ENCODE measurements at regions of chr18 and their contacts with region 1.

Region 1: GRCh38 chr18:45920367-45920766 is 46.8 kb downstream of the EPG5 start:
- DNase-seq: peak; percentile 89
- ATAC-seq: peak; percentile 96

Region 2: GRCh38 chr18:45967007-45967706 is 46.8 kb after region 1 on chr18 and contains the start of gene EPG5:
- intact Hi-C with region 1: loop called in 1 of 2 experiments (anchors 5 kb)
- DNase-seq: peak; percentile 96
- ATAC-seq: peak; percentile 100
- total RNA-seq, gene EPG5: 19.5 to 23.3 TPM